BJ (cell line): ENCODE measurements at regions of chrX and their contacts with region 1.

Region 1: GRCh38 chrX:41259516-41259915 is 74.4 kb upstream of the DDX3X start:
- DNase-seq: no peak
- H3K4me3 ChIP-seq: no peak overlapping the region
- H3K27me3 ChIP-seq: no peaks in the 10 kb centered on the region
- CTCF ChIP-seq: no peak

Region 2: DNA sequence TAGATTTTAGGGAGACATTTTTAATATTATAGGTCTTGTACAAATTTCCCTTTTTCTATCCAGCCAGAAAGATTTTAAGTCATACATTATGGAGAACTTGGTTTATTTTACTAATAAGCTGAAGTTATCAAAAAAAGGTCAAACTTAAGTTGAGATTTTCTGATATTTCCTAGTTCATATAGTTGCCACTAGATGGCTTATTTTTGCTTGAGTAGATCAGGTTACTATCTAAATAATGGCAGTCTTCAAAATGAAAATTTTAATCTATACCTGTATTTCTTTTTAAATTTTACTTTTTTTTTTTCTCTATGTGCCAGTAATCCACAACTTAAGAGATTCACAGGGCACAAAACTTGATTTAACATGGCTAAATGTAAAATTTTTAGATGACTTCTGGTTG is 121.9 kb before region 1 on chrX:
- CTCF ChIA-PET with region 1: no interaction called
- POLR2A ChIA-PET with region 1: no interaction called
- DNase-seq: no peak
- H3K4me3 ChIP-seq: no peak overlapping the region
- H3K27me3 ChIP-seq: no peaks in the 10 kb centered on the region
- CTCF ChIP-seq: peak; percentile 37; the same call in 1 of the 2 replicates

Region 3: DNA sequence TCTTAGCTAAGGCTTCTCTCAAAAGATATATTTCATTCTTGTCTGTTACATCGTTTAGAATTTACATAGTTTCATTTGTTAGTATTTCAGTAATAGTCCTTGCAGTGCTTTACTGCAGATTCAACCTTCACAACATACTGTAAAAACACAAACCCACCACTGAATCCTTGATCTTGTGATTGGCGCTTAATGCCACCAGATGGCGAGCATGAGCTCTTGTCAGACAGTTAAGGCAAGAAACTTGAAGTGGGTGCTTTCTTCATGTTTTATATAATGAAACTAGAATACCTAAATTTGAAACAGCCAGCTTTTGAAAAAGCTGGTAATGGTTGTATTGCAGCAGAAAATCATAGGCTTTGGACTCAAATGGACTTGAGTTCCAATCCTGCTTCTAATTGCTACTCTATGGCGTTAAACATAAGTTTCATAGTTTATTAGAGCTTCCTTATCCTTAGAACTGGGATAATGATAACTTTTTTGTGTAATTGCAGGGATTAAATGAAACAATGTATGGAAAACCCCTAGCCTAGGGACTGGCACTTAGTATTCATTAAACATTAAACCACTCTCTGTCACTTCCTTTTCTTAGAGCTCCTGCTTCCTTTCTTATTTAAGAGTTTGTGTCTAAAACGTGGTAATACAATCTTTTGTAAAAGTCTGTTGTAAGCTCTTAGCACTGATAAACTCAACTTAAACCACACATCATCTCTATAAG is 79.2 kb before region 1 on chrX:
- CTCF ChIA-PET with region 1: interaction called, 28 read pairs
- POLR2A ChIA-PET with region 1: no interaction called
- DNase-seq: peak; percentile 6
- H3K4me3 ChIP-seq: no peak overlapping the region
- H3K27me3 ChIP-seq: no peaks in the 10 kb centered on the region
- CTCF ChIP-seq: peak; percentile 61